Stomach (tissue), 19 donors: ENCODE measurements at regions of chr21 and their contacts with region 1.

Region 1: GRCh38 chr21:36141513-36141925 is 6.6 kb downstream of the CBR3 start:
- DNase-seq: peak; percentile 94 to 97
- H3K4me3 ChIP-seq: no peak overlapping the region
- H3K27ac ChIP-seq: peak overlapping the region; percentile 22 to 67 (median 35)
- H3K4me1 ChIP-seq: peaks cover 2 to 21% (median 17%) of the 10 kb centered on the region in 4 donors
- H3K27me3 ChIP-seq: no peaks in the 10 kb centered on the region
- CTCF ChIP-seq: peak in 5 of 7 experiments; percentile 67 to 88 (median 85)
- EP300 ChIP-seq: no peak
- POLR2A ChIP-seq: no peak

Region 2: GRCh38 chr21:36209626-36210171 is 68.2 kb after region 1 on chr21:
- intact Hi-C with region 1: loop called (anchors 10 kb)
- DNase-seq: peak; percentile 70 to 83
- H3K4me3 ChIP-seq: no peak overlapping the region
- H3K27ac ChIP-seq: peak overlapping the region in 2 of 5 donors; percentile 10 to 59
- H3K4me1 ChIP-seq: peaks cover 0 to 14% (median 0%) of the 10 kb centered on the region in 4 donors
- H3K27me3 ChIP-seq: no peaks in the 10 kb centered on the region
- CTCF ChIP-seq: peak in 5 of 7 experiments; percentile 24 to 85 (median 51)
- EP300 ChIP-seq: no peak
- POLR2A ChIP-seq: no peak

Region 3: GRCh38 chr21:36330904-36331303 is 189.4 kb after region 1 on chr21:
- intact Hi-C with region 1: loop called (anchors 10 kb)
- DNase-seq: peak; percentile 57 to 79
- H3K4me3 ChIP-seq: no peak overlapping the region
- H3K27ac ChIP-seq: no peak overlapping the region
- H3K4me1 ChIP-seq: peaks cover 45 to 69% (median 60%) of the 10 kb centered on the region in 4 donors
- H3K27me3 ChIP-seq: no peaks in the 10 kb centered on the region
- CTCF ChIP-seq: peak in 5 of 7 experiments; percentile 38 to 73 (median 66)
- EP300 ChIP-seq: no peak
- POLR2A ChIP-seq: no peak

Region 4: GRCh38 chr21:36419996-36420395 is 278.5 kb after region 1 on chr21:
- intact Hi-C with region 1: no loop called
- DNase-seq: peak; percentile 85 to 96
- H3K4me3 ChIP-seq: no peak overlapping the region
- H3K27ac ChIP-seq: no peak overlapping the region
- H3K4me1 ChIP-seq: peaks cover 0 to 13% (median 9%) of the 10 kb centered on the region in 4 donors
- H3K27me3 ChIP-seq: no peaks in the 10 kb centered on the region
- CTCF ChIP-seq: peak in 5 of 7 experiments; percentile 50 to 77 (median 69)
- EP300 ChIP-seq: no peak
- POLR2A ChIP-seq: no peak